PC-3 (cell line): ENCODE measurements at regions of chr3 and their contacts with region 1.

Region 1: DNA sequence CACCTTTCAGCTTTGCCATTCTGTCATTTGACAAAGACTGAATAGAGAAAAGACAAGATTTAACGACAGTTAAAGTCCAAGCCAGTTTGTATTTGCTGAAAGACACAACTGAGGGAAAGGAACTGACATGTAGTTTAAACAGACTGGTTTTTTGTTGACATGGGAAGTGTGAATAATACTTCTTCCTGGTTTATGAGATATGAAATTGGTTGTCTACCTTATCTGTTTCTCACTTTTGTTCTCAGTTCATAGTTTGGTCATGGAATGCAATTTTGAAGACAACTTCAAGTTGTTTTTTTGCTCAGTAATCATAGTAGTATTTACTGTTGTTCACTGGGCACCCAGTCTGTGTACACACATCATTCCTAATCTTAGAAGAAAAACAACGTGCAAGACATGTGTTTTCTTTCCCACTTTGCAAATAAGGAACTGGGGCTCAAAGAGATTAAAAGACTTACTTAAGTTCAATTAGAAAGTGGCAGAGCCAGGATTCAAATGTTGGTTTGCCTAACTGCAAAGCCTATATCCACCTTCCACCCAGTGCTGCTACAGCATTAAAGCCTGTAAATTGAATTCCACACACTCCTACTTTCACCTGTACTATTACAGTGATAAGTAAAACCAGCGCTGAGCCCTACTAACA is 103.5 kb downstream of the LPP start:
- DNase-seq: peak; percentile 36
- ATAC-seq: peak; percentile 39
- H3K4me3 ChIP-seq: no peak overlapping the region
- H3K27ac ChIP-seq: no peak overlapping the region; the same call in 1 of the 2 replicates
- H3K4me1 ChIP-seq: peaks cover 38% of the 10 kb centered on the region
- H3K27me3 ChIP-seq: no peaks in the 10 kb centered on the region
- CTCF ChIP-seq: no peak

Region 2: DNA sequence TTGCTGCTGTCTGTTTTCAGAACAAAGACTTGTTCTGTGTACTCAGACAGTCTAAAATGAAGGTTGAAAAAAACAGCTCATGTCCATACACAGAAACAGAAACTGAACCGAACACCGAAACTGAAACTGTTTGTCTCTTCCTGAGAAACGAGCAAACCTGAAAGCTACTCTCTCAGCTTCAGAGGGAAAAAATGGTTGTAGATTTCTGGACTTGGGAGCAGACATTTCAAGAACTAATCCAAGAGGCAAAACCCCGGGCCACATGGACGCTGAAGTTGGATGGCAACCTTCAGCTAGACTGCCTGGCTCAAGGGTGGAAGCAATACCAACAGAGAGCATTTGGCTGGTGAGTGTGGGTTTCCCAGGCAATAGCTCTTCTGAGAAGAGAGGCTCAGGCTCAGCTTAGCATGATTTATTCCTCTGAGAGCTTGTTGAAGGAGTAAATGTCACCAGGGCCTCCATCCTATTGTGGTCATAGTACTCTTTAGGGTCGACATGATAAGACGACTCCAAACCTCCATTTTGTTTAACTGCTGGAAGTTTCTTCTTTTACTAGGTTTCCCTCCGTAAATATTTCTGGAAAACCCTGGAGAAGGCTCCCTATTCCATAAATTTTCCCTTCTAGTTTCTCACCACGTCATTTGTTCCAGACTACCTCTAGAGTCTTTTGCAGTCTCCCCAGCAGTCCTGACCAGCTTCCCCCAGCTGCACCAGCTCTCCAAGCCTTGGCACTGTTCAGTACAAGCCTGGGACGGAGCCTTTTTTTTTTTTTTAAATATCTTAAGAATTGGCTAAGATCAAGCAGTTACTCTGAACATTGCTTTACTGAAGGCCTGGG is 889.0 kb before region 1 on chr3 and contains the start of gene RTP4:
- CTCF ChIA-PET with region 1: no interaction called
- POLR2A ChIA-PET with region 1: no interaction called
- intact Hi-C with region 1: no loop called
- DNase-seq: peak; percentile 7
- ATAC-seq: peak; percentile 35; the same call in 1 of the 2 replicates
- H3K4me3 ChIP-seq: no peak within 1 kb of the TSS
- H3K27ac ChIP-seq: no peak within 1 kb of the TSS
- H3K4me1 ChIP-seq: no peaks in the 10 kb centered on the region
- H3K27me3 ChIP-seq: peaks cover 38% of the 10 kb centered on the region
- CTCF ChIP-seq: no peak
- total RNA-seq, gene RTP4: 0.11 TPM in 1 of 2 replicates, not detected in the other

Region 3: GRCh38 chr3:188244395-188244861 is 13.1 kb before region 1 on chr3:
- CTCF ChIA-PET with region 1: no interaction called
- POLR2A ChIA-PET with region 1: interaction called, 3 read pairs
- intact Hi-C with region 1: loop called (anchors 2 kb)
- DNase-seq: peak; percentile 92
- ATAC-seq: peak; percentile 93
- H3K4me3 ChIP-seq: 0 out of 2 replicates have a peak overlapping the region, but pooled peaks have one; percentile 2
- H3K27ac ChIP-seq: peak overlapping the region; percentile 85
- H3K4me1 ChIP-seq: peaks cover 34% of the 10 kb centered on the region
- H3K27me3 ChIP-seq: no peaks in the 10 kb centered on the region
- CTCF ChIP-seq: no peak

Region 4: DNA sequence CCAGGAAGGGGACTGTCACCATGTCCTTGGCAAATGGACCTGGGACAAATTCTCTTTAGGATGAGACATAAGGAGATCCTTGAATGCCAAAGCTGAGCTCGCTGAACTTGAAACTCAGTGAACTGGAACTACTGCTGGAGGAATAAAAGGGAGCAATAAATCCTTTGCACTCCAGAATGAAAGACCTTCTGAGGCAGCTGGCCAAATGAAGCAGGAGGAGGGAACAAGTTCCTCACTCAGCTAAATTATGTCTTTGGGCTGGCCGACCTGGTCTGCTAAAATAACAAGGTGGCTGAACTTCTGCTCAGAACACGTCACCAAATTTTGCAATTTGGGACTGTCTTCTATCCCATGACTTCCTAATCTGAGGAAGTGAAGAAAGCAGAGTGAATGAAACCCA is 211.2 kb after region 1 on chr3:
- CTCF ChIA-PET with region 1: no interaction called
- POLR2A ChIA-PET with region 1: no interaction called
- intact Hi-C with region 1: no loop called
- DNase-seq: no peak
- ATAC-seq: no peak
- H3K4me3 ChIP-seq: no peak overlapping the region
- H3K27ac ChIP-seq: no peak overlapping the region
- H3K4me1 ChIP-seq: peaks cover 3% of the 10 kb centered on the region; the same call in 1 of the 2 replicates
- H3K27me3 ChIP-seq: no peaks in the 10 kb centered on the region
- CTCF ChIP-seq: no peak

Region 5: GRCh38 chr3:188602111-188602510 is 344.6 kb after region 1 on chr3:
- CTCF ChIA-PET with region 1: no interaction called
- POLR2A ChIA-PET with region 1: no interaction called
- intact Hi-C with region 1: no loop called
- DNase-seq: no peak
- ATAC-seq: no peak
- H3K4me3 ChIP-seq: no peak overlapping the region
- H3K27ac ChIP-seq: no peak overlapping the region
- H3K4me1 ChIP-seq: peaks cover 3% of the 10 kb centered on the region
- H3K27me3 ChIP-seq: no peaks in the 10 kb centered on the region
- CTCF ChIP-seq: no peak